ENCODE measurements at regions of chr13 and their contacts with region 1.

Region 1: GRCh38 chr13:108895220-108895704 is 265.9 kb downstream of the MYO16 start:
- DNase-seq: no peak
- ATAC-seq: no peak
- H3K4me3 ChIP-seq: no peak overlapping the region
- H3K27ac ChIP-seq: no peak overlapping the region
- H3K4me1 ChIP-seq: no peaks in the 10 kb centered on the region
- H3K27me3 ChIP-seq: peaks cover 0 to 6% (median 0%) of the 10 kb centered on the region in 9 donors
- CTCF ChIP-seq: peak; percentile 47 to 73 (median 56)
- POLR2A ChIP-seq: no peak

Region 2: DNA sequence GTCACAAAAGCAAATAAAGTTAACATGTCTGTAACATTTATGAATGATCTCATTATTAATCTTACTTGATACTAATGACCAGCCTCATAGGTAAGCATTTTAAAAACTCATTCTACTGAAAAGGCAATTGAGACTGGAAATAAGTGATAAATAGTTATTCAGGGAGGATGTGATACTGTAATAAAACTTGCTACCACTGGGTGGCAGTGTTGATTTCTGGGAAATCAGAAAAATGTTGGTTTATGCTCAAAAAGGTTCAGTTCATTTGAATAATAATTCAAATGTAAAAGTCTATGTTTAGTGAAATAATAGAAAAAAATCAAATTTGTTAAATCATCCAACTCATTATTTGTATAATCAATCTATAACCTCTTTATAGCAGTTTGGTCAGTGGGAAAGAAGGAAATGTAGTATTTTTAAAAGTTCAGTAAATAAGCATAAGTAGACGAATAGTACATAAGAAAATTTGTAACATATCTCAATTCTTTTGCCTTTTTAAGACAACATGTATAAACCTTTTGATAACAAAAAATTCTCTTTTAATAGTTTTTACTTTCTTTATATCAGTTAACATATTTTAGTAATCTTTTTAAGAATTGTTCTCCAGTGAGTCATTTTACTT is 667.5 kb before region 1 on chr13:
- intact Hi-C with region 1: loop called in 3 of 10 experiments (anchors 5 to 10 kb)
- DNase-seq: no peak
- ATAC-seq: no peak
- H3K4me3 ChIP-seq: no peak overlapping the region
- H3K27ac ChIP-seq: no peak overlapping the region
- H3K4me1 ChIP-seq: peaks cover 4 to 49% (median 30%) of the 10 kb centered on the region in 12 donors
- H3K27me3 ChIP-seq: no peaks in the 10 kb centered on the region
- CTCF ChIP-seq: peak; percentile 67 to 90 (median 83)
- POLR2A ChIP-seq: no peak

Region 3: DNA sequence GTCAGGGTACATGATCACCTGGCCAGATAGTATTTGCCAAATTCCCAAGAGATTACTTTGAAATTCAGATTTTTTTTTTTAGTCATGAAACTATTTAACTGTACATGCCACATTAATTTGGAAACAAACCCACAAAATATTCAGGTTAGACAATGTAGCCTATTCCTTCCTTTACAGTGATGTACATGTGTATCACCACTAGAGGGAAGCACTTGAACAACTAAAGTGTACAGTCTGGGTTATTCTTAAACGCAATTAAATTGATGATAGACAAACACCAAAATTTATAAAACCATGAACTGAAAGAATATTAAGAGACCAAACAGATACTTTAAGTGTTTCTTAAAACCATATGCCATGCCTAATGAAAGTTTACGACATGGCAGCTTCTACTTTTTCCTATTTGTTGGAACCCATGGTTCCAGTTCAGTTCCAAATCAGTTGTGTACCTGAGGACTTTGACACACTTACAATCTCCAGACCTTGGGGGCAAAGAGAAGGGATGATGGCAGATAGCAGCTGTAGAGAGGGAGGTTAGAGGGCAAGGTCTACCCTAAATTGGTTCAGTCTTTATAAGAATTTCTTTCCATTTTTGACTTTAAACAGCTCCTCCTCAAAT is 572.9 kb before region 1 on chr13:
- intact Hi-C with region 1: loop called in 9 of 10 experiments (anchors 2 to 5 kb)
- DNase-seq: no peak
- ATAC-seq: peak in 3 of 4 donors; percentile 69 to 76 (median 72)
- H3K4me3 ChIP-seq: no peak overlapping the region
- H3K27ac ChIP-seq: no peak overlapping the region
- H3K4me1 ChIP-seq: peaks cover 0 to 19% (median 0%) of the 10 kb centered on the region in 12 donors
- H3K27me3 ChIP-seq: peaks cover 0 to 4% (median 0%) of the 10 kb centered on the region in 9 donors
- CTCF ChIP-seq: peak; percentile 64 to 85 (median 77)
- POLR2A ChIP-seq: no peak

Region 4: GRCh38 chr13:108342369-108343289 is 552.6 kb before region 1 on chr13:
- intact Hi-C with region 1: loop called in 9 of 10 experiments (anchors 2 to 5 kb)
- DNase-seq: no peak
- ATAC-seq: peak in 3 of 4 donors; percentile 38 to 53 (median 42)
- H3K4me3 ChIP-seq: no peak overlapping the region
- H3K27ac ChIP-seq: peak overlapping the region in 1 of 12 donors; percentile 22
- H3K4me1 ChIP-seq: peaks cover 0 to 4% (median 0%) of the 10 kb centered on the region in 12 donors
- H3K27me3 ChIP-seq: peaks cover 0 to under 1% (median 0%) of the 10 kb centered on the region in 9 donors
- CTCF ChIP-seq: peak; percentile 27 to 66 (median 52)
- POLR2A ChIP-seq: no peak

Region 5: DNA sequence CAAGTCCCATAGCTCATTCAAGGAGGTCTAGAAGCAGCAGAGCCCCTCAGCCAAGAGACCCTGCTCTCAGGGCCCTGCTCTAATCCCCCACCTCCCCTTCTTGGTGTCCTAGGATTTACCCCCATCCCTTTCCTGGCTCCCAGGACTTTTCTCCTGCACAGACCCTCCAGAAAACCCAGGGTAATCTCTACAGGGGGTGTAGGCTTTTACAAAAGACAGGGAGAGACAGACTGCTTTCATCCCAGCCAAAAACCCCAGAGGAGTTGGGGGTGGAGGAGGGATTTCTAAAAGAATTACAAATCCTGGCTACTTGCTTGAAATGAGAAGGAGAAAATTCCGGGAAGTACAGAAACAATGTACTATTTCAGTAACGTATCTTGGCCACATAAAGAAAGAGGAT is 492.4 kb before region 1 on chr13:
- intact Hi-C with region 1: loop called in 1 of 10 experiments (anchors 5 kb)
- DNase-seq: no peak
- ATAC-seq: no peak
- H3K4me3 ChIP-seq: no peak overlapping the region
- H3K27ac ChIP-seq: no peak overlapping the region
- H3K4me1 ChIP-seq: no peaks in the 10 kb centered on the region
- H3K27me3 ChIP-seq: no peaks in the 10 kb centered on the region
- CTCF ChIP-seq: no peak
- POLR2A ChIP-seq: no peak

Region 6: GRCh38 chr13:108609353-108609752 is 285.9 kb before region 1 on chr13:
- intact Hi-C with region 1: loop called in 9 of 10 experiments (anchors 1 to 5 kb)
- DNase-seq: no peak
- ATAC-seq: peak in 1 of 4 donors; percentile 38
- H3K4me3 ChIP-seq: no peak overlapping the region
- H3K27ac ChIP-seq: no peak overlapping the region
- H3K4me1 ChIP-seq: peaks cover 0 to 9% (median 0%) of the 10 kb centered on the region in 12 donors
- H3K27me3 ChIP-seq: no peaks in the 10 kb centered on the region
- CTCF ChIP-seq: peak; percentile 25 to 64 (median 54)
- POLR2A ChIP-seq: no peak

Measured in heart left ventricle (tissue), 16 donors.